ENCODE measurements at regions of chr2 and their contacts with region 1.

Region 1: GRCh38 chr2:111168528-111169239 is 48.0 kb downstream of the BCL2L11 start:
- DNase-seq: peak; percentile 61
- H3K4me3 Mint-ChIP-seq: peak overlapping the region; percentile 0
- H3K27ac Mint-ChIP-seq: peak overlapping the region; percentile 76
- H3K4me1 Mint-ChIP-seq: peaks cover 60% of the 10 kb centered on the region
- H3K27me3 Mint-ChIP-seq: peaks cover 12% of the 10 kb centered on the region

Region 2: GRCh38 chr2:111178730-111179405 is 10.2 kb after region 1 on chr2:
- intact Hi-C with region 1: no loop called
- DNase-seq: no peak
- H3K4me3 Mint-ChIP-seq: no peak overlapping the region
- H3K27ac Mint-ChIP-seq: no peak overlapping the region
- H3K4me1 Mint-ChIP-seq: no peaks in the 10 kb centered on the region
- H3K27me3 Mint-ChIP-seq: peaks cover 31% of the 10 kb centered on the region

Region 3: GRCh38 chr2:111239107-111239506 is 70.4 kb after region 1 on chr2:
- intact Hi-C with region 1: loop called (anchors 5 kb)
- DNase-seq: peak; percentile 60
- H3K4me3 Mint-ChIP-seq: peak overlapping the region; percentile 60
- H3K27ac Mint-ChIP-seq: peak overlapping the region; percentile 93
- H3K4me1 Mint-ChIP-seq: peaks cover 48% of the 10 kb centered on the region
- H3K27me3 Mint-ChIP-seq: peaks cover 6% of the 10 kb centered on the region